WTC11 (cell line): ENCODE measurements at regions of chr2 and their contacts with region 1.

Region 1: GRCh38 chr2:11417946-11418585 is 47.9 kb downstream of the E2F6 start:
- DNase-seq: peak; percentile 26
- ATAC-seq: peak; percentile 24; the same call in 1 of the 2 replicates
- H3K4me3 Mint-ChIP-seq: no peak overlapping the region
- H3K27ac Mint-ChIP-seq: no peak overlapping the region; the same call in 1 of the 2 replicates
- H3K4me1 Mint-ChIP-seq: no peaks in the 10 kb centered on the region
- H3K27me3 Mint-ChIP-seq: peaks cover 3% of the 10 kb centered on the region
- CTCF ChIP-seq: peak; percentile 43; the same call in 1 of the 2 replicates

Region 2: DNA sequence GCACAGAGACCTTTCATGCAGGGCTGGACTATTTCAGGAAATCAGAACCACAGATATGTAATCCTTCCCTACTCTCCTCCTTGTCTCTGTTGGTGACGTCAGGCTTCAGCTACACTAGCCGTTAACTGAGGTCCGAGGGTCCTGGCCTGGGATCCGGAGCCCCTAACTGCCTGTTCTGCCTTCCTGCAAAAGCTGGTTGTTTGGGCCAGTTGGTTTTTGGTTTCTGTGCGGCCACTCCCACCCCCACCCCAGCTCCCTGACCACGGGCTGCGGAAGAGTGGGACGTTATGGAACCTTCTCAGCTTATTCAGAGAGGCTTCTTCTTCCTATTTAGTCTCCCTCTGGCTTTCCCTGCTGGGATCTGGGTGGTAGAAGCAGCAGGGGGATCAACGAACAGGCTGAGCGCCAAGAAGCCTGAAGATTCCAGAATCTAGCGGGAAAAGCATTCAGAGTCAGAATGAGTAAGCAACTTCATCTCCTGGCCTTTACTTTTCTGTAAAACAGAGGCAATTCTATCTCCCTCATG is 24.3 kb before region 1 on chr2:
- CTCF ChIA-PET with region 1: no interaction called
- POLR2A ChIA-PET with region 1: no interaction called
- DNase-seq: no peak
- ATAC-seq: no peak
- H3K4me3 Mint-ChIP-seq: no peak overlapping the region
- H3K27ac Mint-ChIP-seq: peak overlapping the region; percentile 4; the same call in 1 of the 2 replicates
- H3K4me1 Mint-ChIP-seq: peaks cover 37% of the 10 kb centered on the region
- H3K27me3 Mint-ChIP-seq: no peaks in the 10 kb centered on the region
- CTCF ChIP-seq: no peak

Region 3: DNA sequence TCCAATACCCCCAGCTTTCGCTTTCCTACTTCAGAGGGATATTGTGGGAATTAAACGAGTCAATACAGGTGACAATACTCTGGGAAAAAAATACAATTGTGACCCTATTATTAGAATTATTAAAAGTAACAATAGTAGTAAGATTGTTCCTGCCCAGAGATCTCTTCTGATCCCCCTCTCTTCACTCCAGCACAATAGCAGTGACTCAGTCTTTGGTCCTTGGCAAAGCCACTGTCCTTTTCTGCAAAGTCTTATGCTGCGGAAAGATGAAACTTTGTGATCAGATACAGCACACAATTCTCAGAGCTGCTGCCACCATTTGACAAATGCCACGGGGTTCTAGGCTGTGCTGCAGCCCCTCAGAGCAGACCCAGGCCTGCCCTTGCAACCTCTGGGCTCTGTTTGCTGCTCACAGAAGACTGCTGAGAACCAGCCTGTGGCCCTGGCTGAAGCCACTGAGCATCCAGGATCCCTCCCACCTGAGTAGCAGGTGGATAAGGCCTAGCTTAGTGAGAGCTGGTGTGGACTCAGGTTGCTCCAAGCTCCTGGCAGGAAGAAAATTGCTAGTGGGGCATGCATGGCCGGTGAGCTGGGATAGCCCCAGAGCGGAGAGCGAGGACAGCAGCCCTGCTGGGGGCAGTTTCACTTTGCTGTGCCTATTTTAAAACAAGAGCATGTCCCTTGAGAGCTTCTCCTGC is 13.5 kb before region 1 on chr2:
- CTCF ChIA-PET with region 1: interaction called, 15 read pairs
- POLR2A ChIA-PET with region 1: no interaction called
- DNase-seq: no peak
- ATAC-seq: no peak
- H3K4me3 Mint-ChIP-seq: no peak overlapping the region
- H3K27ac Mint-ChIP-seq: no peak overlapping the region
- H3K4me1 Mint-ChIP-seq: peaks cover 7% of the 10 kb centered on the region
- H3K27me3 Mint-ChIP-seq: no peaks in the 10 kb centered on the region
- CTCF ChIP-seq: no peak

Region 4: DNA sequence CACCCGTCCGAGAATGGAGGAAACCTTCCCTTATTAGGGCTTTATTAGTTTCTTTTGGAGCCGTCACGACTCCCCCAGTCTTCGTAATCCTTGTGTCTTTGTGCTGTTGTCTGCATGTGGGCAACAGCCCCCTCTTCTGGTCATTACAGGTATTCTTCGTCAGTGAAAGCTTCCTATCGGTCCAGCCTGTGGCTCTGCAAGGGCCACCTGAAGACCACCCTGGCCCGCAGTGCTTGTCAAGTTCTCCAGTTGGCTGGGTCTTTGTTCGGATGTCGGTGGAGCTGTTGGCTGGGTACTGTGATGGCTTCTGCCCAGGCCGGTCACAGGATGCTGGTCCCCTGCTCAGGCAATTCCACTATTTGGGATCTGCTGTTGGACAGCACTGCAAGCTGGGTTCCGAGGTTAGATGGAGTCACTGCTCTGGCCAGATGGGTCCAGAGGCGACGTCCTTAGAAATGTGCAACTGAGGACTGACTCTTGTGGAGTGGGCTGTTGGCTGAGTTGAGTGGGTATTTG is 28.7 kb after region 1 on chr2:
- CTCF ChIA-PET with region 1: interaction called, 13 read pairs
- POLR2A ChIA-PET with region 1: no interaction called
- DNase-seq: peak; percentile 73
- ATAC-seq: peak; percentile 98
- H3K4me3 Mint-ChIP-seq: no peak overlapping the region
- H3K27ac Mint-ChIP-seq: no peak overlapping the region
- H3K4me1 Mint-ChIP-seq: no peaks in the 10 kb centered on the region
- H3K27me3 Mint-ChIP-seq: no peaks in the 10 kb centered on the region
- CTCF ChIP-seq: peak; percentile 83